Pancreas (tissue), 10 donors: ENCODE measurements at regions of chr2 and their contacts with region 1.

Region 1: DNA sequence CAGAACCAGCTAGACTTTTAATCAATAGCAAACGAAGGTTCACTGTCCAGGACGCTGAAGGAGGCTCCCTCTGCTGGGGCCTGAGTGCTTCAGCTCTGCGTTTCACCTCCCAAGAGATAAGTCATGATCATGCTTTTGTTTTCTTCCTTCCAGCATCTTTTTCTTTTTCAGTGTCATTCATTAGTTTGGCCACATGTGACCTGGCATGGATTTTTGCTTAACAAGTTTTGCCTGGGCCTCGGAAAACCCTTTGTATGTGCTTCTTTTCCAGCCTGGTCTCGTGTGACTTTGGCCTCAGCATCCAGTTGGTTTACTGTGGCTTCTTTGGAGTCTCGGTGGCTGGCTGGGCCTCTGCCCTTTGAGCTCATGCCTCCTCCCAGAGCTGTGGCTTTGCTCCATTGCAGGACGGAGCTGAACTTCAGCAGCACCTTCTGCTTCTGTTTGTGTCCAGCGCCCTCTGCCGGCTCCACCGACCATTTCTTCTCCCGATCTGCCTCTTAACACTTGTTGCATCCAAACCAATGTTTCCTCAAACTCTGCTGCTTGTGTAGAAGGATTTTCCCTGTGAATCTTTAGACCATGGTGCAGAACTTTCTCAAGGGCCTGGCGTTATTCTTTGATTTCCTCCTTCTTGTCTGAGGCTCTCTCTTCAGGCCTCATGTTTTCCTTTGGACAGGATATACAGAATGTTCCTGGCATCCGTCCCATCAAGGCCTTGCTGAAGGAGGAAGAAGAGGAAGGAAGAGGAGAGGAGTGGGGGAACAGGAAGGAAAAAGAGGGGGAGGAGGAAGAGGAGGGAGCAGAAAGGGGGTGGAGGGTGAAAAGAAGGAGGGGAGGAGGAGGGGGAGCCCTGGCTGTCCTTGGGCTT is 23.6 kb upstream of the HES6 start:
- DNase-seq: peak; percentile 83 to 93 (median 90)
- ATAC-seq: peak; percentile 88 to 96 (median 92)
- H3K4me3 ChIP-seq: no peak overlapping the region
- H3K27ac ChIP-seq: peak overlapping the region in 3 of 4 donors; percentile 28 to 36 (median 34)
- H3K4me1 ChIP-seq: peaks cover 0 to 4% (median 0%) of the 10 kb centered on the region in 3 donors
- H3K27me3 ChIP-seq: no peaks in the 10 kb centered on the region
- CTCF ChIP-seq: peak; percentile 63 to 76 (median 69)

Region 2: GRCh38 chr2:238320246-238320647 is 56.8 kb after region 1 on chr2 and contains the start of gene TRAF3IP1:
- intact Hi-C with region 1: loop called in 1 of 3 experiments (anchors 10 kb)
- DNase-seq: peak; percentile 97 to 99 (median 98)
- ATAC-seq: peak; percentile 98 to 99 (median 99)
- H3K4me3 ChIP-seq: peak within 1 kb of the TSS; percentile 75 to 84 (median 76)
- H3K27ac ChIP-seq: peak within 1 kb of the TSS; percentile 20 to 79 (median 50)
- H3K4me1 ChIP-seq: peaks cover 0 to 8% (median 7%) of the 10 kb centered on the region in 3 donors
- H3K27me3 ChIP-seq: no peaks in the 10 kb centered on the region
- CTCF ChIP-seq: no peak
- total RNA-seq, gene TRAF3IP1: 4.9 to 10.3 (median 7.9) TPM

Region 3: DNA sequence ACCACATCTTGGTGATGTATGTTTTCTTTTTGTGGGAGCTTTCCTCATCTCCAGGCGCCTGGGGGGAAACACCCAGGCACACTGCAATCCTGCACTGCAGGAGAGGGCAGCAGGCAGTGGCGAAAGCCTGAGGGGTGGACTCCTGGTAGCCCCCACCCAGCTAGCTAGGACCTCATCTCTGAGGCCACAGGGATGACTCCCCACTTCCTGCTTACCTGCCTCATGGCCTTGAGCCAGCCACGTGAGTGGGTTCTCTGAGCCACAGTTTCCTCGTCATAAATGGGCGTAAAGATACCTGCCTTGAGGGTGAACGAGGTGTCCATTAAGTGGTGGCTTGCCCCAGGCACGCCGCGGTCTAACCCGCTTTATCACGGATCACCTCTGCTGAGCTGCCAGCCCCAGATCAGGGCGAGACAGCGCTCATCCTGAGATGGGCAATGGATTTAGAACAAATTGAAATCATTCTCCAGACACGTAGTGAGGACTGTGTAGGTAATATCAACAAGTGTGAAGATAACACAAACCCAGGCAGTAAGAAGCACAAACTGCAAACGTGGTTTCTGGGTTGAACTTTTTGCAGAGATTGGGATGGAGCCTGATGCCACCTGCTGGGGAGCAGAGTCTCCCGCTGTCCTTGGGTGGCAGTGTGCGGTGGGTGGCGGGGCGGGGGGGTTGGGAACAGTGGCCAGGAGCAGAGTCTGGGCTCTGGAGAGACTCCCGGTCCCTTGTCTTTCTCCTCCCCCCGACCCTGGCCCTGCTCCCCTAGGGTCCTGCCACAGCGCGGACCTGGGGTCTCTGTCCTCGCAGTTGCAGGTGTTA is 76.2 kb after region 1 on chr2:
- intact Hi-C with region 1: loop called in 1 of 3 experiments (anchors 5 kb)
- DNase-seq: no peak
- ATAC-seq: peak; percentile 74 to 92 (median 86)
- H3K4me3 ChIP-seq: no peak overlapping the region
- H3K27ac ChIP-seq: no peak overlapping the region
- H3K4me1 ChIP-seq: no peaks in the 10 kb centered on the region
- H3K27me3 ChIP-seq: no peaks in the 10 kb centered on the region
- CTCF ChIP-seq: no peak